ENCODE measurements at regions of chr7 and their contacts with region 1.

Region 1: DNA sequence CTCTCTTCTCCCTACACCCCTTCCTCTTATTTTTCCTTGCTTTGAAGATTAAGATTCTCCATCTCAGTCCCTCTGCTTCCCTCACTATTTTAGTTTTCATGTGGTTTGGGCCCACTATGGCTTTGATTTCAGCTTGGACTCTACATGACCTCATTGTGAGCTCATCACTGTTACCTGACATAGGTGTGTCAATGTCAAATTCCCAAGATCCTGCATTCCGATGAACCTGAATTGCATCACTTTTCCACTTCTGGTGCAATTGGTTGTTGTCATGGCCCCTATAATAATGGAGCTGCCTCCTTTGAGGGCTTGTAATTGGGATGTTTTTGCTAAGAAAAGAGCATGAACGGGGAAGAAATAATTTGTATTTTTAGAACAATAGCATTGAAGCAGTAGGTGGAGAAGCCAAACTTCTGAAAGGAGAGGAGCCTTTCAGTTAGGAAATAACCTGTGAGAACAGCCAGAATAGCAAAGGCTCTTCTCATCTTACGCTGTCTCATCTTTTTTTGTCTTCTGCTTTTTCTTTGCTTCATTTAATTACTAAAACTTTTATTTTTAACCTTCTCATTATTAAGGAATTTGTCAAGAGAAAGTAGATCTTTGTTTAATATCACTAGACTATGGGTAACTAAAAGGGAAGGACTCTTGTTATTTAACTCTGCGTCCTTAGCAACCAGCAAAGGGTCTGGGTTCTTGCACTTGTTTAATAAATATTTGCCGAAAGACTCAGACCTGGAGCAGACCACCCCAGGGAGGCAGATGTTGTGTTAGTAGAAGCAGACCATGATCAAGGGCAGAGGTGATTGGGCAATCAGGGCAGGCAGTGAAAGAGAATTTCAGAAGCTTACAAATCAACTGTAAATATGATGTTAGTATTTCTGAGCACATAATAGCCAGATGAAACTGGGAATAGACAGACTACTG is 95.4 kb downstream of the TES start:
- DNase-seq: no peak
- ATAC-seq: no peak
- H3K4me3 ChIP-seq: no peak overlapping the region
- H3K27ac ChIP-seq: peak overlapping the region in 1 of 12 donors; percentile 3
- H3K4me1 ChIP-seq: no peaks in the 10 kb centered on the region
- H3K27me3 ChIP-seq: no peaks in the 10 kb centered on the region
- CTCF ChIP-seq: no peak
- POLR2A ChIP-seq: no peak

Region 2: DNA sequence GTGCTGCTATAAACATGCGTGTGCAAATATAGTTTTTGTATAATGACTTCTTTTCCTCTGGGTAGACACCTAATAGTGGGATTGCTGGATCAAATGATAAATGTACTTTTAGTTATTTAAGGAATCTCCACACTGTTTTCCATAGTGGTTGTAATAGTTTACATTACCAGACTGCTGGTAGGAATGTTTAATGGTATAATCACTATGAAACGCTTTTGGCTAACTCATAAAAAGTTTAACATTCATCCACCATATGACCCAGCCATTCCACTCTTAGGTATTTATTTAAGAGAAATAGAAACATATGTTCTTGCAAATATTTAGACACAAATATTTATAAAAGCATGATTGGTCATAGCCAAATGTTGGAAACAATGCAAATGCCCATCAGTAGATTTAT is 243.1 kb before region 1 on chr7:
- intact Hi-C with region 1: no loop called
- DNase-seq: no peak
- ATAC-seq: no peak
- H3K4me3 ChIP-seq: no peak overlapping the region
- H3K27ac ChIP-seq: no peak overlapping the region
- H3K4me1 ChIP-seq: no peaks in the 10 kb centered on the region
- H3K27me3 ChIP-seq: no peaks in the 10 kb centered on the region
- CTCF ChIP-seq: no peak
- POLR2A ChIP-seq: no peak

Region 3: GRCh38 chr7:116290740-116291139 is 15.0 kb before region 1 on chr7:
- intact Hi-C with region 1: loop called in 1 of 10 experiments (anchors 1 kb)
- DNase-seq: no peak
- ATAC-seq: peak in 3 of 4 donors; percentile 39 to 55 (median 49)
- H3K4me3 ChIP-seq: no peak overlapping the region
- H3K27ac ChIP-seq: no peak overlapping the region
- H3K4me1 ChIP-seq: peaks cover 0 to 5% (median 0%) of the 10 kb centered on the region in 12 donors
- H3K27me3 ChIP-seq: no peaks in the 10 kb centered on the region
- CTCF ChIP-seq: peak in 7 of 12 donors; percentile 8 to 28 (median 15)
- POLR2A ChIP-seq: no peak

Measured in heart left ventricle (tissue), 16 donors.